Transverse colon (tissue), 4 donors: ENCODE measurements at regions of chr4 and their contacts with region 1.

Region 1: DNA sequence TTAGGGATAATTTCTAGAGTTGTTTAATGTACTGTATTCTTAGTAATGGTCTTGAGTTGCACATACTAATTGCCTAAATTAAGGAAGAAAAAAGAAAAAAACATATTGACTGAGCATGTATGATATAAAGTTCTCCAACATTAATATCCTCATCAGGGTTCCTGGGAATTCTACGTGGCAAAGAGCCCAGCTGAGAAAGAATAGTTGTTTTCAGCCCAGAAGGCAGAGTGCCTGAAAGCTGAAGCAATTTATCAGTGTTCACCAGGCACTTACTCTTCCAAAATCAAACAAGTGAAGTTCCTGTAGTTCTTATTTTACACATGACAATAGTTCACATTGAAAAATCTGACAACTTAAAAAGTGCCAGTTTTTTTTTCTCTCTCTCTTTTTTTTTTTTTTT is 27.7 kb downstream of the YIPF7 start:
- DNase-seq: no peak
- H3K4me3 ChIP-seq: no peak overlapping the region
- H3K27ac ChIP-seq: no peak overlapping the region
- H3K4me1 ChIP-seq: no peaks in the 10 kb centered on the region
- H3K27me3 ChIP-seq: no peaks in the 10 kb centered on the region
- CTCF ChIP-seq: no peak
- EP300 ChIP-seq: no peak
- POLR2A ChIP-seq: no peak

Region 2: DNA sequence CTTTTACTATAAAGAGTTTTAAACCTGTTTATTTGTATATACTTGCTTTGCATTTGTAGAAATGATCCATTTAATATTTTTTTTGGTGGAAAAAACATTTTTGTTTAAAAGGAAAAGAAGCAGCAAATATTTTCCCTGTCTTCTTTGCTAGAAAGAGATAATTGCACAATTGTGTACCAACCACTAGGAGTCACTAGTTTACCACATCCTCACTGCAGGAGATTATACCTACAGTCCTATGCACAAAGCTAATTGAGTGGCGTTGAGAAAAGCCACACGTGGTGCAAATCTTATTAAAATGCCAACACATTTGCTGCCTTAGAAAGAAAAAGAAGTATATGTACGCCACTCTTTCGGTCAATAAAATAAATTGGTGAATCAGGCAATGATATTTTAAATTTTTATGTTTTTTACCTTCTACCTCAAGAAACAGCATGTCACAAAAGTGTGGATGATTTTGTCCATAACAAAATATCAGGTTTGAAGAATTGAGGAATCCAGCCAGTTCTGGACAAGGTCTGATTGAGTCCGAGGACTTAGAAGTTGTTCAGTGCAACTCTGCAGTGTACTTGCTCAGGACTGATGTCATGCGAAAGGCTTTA is 1628.2 kb before region 1 on chr4:
- in situ Hi-C with region 1: loop called in 1 of 4 experiments (anchors 25 kb)
- intact Hi-C with region 1: no loop called
- DNase-seq: no peak
- H3K4me3 ChIP-seq: no peak overlapping the region
- H3K27ac ChIP-seq: no peak overlapping the region
- H3K4me1 ChIP-seq: no peaks in the 10 kb centered on the region
- H3K27me3 ChIP-seq: no peaks in the 10 kb centered on the region
- CTCF ChIP-seq: peak in 3 of 5 experiments; percentile 22 to 39 (median 37)
- EP300 ChIP-seq: no peak
- POLR2A ChIP-seq: no peak

Region 3: GRCh38 chr4:43132010-43132582 is 1491.6 kb before region 1 on chr4:
- in situ Hi-C with region 1: loop called in 1 of 4 experiments (anchors 25 kb)
- intact Hi-C with region 1: no loop called
- DNase-seq: peak; percentile 31
- H3K4me3 ChIP-seq: no peak overlapping the region
- H3K27ac ChIP-seq: no peak overlapping the region
- H3K4me1 ChIP-seq: peaks cover 0 to 4% (median 0%) of the 10 kb centered on the region in 4 donors
- H3K27me3 ChIP-seq: no peaks in the 10 kb centered on the region
- CTCF ChIP-seq: peak in 3 of 5 experiments; percentile 46 to 56 (median 52)
- EP300 ChIP-seq: no peak
- POLR2A ChIP-seq: no peak

Region 4: DNA sequence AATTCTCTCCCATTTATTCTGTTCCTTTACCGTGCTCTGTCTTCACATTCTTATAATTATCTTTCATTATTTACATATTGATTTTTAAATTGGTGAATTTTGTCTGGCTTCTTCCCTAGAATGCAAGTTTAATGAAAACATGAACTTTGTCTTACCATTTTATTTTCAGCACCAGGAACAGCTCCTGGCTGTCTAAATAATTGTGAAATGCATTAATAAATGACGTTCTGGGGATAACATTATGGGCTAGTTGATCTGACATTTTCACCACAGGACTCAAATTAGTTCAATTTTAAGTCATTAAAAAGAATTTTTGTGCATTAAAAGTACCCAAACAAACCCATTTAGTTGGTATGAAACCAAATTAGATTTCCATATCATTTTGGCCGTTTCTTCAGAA is 272.6 kb before region 1 on chr4:
- in situ Hi-C with region 1: no loop called
- intact Hi-C with region 1: no loop called
- DNase-seq: no peak
- H3K4me3 ChIP-seq: no peak overlapping the region
- H3K27ac ChIP-seq: no peak overlapping the region
- H3K4me1 ChIP-seq: no peaks in the 10 kb centered on the region
- H3K27me3 ChIP-seq: no peaks in the 10 kb centered on the region
- CTCF ChIP-seq: no peak
- EP300 ChIP-seq: no peak
- POLR2A ChIP-seq: no peak